Tibial artery (tissue), 4 donors: ENCODE measurements at regions of chrX and their contacts with region 1.

Region 1: DNA sequence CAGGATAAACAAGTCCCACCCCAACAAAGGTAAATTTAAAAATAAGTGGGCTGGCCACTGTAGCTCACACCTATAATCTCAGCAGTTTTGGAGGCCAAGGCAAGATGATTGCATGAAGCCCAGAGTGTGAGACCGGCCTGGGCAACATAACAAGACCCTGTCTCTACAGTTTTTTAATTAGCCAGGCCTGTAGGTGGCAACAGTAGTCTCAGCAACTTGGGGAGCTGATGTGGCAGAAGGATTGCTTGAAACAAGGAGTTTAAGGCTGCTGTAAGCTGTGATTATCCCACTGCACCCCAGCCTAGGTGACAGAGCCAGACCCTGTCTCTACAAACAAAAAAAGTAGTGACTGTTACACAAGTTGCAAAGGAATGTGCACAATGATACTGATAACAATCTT is 74.6 kb upstream of the FAAH2 start:
- DNase-seq: no peak
- H3K4me3 ChIP-seq: no peak overlapping the region
- H3K27ac ChIP-seq: no peak overlapping the region
- H3K4me1 ChIP-seq: no peaks in the 10 kb centered on the region
- H3K27me3 ChIP-seq: no peaks in the 10 kb centered on the region
- CTCF ChIP-seq: no peak

Region 2: GRCh38 chrX:58044144-58044543 is 832.2 kb after region 1 on chrX:
- intact Hi-C with region 1: loop called (anchors 5 kb)
- DNase-seq: no peak
- H3K4me3 ChIP-seq: no peak overlapping the region
- H3K27ac ChIP-seq: no peak overlapping the region
- H3K4me1 ChIP-seq: no peaks in the 10 kb centered on the region
- H3K27me3 ChIP-seq: no peaks in the 10 kb centered on the region
- CTCF ChIP-seq: no peak